Dorsolateral prefrontal cortex (tissue), 120 donors: ENCODE measurements at regions of chr2 and their contacts with region 1.

Region 1: GRCh38 chr2:39059366-39059952 is 61.4 kb downstream of the SOS1 start:
- DNase-seq: no peak
- H3K4me3 ChIP-seq: no peak overlapping the region
- H3K27ac ChIP-seq: no peak overlapping the region
- H3K27me3 ChIP-seq: no peaks in the 10 kb centered on the region
- CTCF ChIP-seq: peak; percentile 60 to 94 (median 80)

Region 2: GRCh38 chr2:39188960-39189494 is 129.6 kb after region 1 on chr2:
- intact Hi-C with region 1: no loop called
- DNase-seq: no peak
- H3K4me3 ChIP-seq: no peak overlapping the region
- H3K27ac ChIP-seq: no peak overlapping the region
- H3K27me3 ChIP-seq: no peaks in the 10 kb centered on the region
- CTCF ChIP-seq: no peak

Region 3: GRCh38 chr2:39227628-39228412 is 168.4 kb after region 1 on chr2:
- intact Hi-C with region 1: loop called (anchors 2 kb)
- DNase-seq: peak; percentile 71 to 87 (median 76)
- H3K4me3 ChIP-seq: peak overlapping the region; percentile 6 to 71 (median 49)
- H3K27ac ChIP-seq: peak overlapping the region in 5 of 59 donors; percentile 9 to 44 (median 30)
- H3K27me3 ChIP-seq: no peaks in the 10 kb centered on the region
- CTCF ChIP-seq: peak; percentile 78 to 98 (median 90)